ENCODE measurements at regions of chr14 and their contacts with region 1.

Region 1: DNA sequence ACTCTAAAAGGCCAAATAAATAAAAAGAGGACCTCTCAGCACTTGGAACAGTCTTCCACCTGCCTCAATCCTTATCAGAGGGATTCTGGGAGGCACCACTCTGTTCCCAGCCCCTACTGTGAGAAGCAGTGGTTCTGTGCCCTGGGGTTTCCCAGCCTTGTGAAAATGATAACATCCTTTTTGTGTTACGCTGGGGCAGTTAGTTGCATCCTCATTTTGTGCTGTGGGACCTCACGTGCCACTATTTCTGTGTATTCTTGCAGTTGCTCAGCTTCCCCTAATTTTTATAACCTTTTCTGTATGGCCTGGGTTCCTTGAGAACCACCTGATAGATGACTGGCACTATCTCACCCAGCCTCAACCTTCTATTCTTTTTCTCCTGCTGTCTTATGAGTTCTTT is 10.8 kb upstream of the CMA1 start:
- DNase-seq: no peak
- H3K4me3 ChIP-seq: no peak overlapping the region
- H3K27ac ChIP-seq: no peak overlapping the region
- H3K4me1 ChIP-seq: no peaks in the 10 kb centered on the region
- H3K27me3 ChIP-seq: no peaks in the 10 kb centered on the region
- CTCF ChIP-seq: no peak
- EP300 ChIP-seq: no peak
- POLR2A ChIP-seq: no peak

Region 2: DNA sequence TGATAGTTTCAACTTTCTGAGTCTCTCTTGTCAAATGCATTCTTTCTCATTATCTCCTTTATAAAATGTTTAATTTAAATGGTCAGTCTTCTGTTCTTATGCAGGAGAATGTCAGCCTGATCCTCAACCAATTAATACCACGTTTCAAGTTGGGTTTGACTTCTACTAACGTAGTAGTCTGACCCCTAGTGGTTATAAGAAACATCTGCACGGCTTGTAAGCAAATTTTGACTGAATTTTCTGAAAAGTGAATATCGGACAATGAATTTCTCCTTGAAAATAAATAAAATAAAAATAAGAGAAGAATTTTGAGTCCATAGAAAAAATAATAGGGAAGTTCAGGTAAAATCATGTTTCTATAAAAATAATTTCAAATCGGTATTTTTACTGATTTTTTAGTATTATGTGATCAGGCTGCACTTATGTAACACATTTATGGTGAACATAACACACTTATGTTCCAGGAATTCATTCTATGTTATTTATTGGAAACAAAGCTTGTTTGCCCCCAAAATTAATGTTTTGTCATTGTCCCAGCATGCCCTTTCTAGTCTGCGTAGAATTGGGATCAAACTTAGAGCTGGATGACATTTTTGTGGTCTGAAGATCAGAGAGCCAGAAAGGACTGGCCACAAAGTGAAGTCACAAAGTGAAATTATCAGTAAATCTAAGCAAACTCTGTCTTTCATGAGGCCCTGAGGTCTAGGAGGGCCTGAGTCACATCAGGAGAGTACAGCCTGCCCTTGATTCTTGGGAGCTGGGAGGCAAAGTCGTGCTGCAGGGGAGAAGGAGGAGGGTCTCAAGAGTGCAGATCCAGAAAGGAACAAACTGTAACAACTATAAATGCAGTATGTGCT is 632.3 kb after region 1 on chr14:
- in situ Hi-C with region 1: no loop called
- intact Hi-C with region 1: loop called (anchors 5 kb)
- DNase-seq: no peak
- H3K4me3 ChIP-seq: no peak overlapping the region
- H3K27ac ChIP-seq: no peak overlapping the region
- H3K4me1 ChIP-seq: no peaks in the 10 kb centered on the region
- H3K27me3 ChIP-seq: no peaks in the 10 kb centered on the region
- CTCF ChIP-seq: peak; percentile 71 to 84 (median 80)
- EP300 ChIP-seq: no peak
- POLR2A ChIP-seq: no peak

Measured in transverse colon (tissue), 4 donors.